Caki2 (cell line): ENCODE measurements at regions of chr11 and their contacts with region 1.

Region 1: GRCh38 chr11:1639102-1639620 is 9.6 kb downstream of the KRTAP5-5 start:
- DNase-seq: no peak

Region 2: DNA sequence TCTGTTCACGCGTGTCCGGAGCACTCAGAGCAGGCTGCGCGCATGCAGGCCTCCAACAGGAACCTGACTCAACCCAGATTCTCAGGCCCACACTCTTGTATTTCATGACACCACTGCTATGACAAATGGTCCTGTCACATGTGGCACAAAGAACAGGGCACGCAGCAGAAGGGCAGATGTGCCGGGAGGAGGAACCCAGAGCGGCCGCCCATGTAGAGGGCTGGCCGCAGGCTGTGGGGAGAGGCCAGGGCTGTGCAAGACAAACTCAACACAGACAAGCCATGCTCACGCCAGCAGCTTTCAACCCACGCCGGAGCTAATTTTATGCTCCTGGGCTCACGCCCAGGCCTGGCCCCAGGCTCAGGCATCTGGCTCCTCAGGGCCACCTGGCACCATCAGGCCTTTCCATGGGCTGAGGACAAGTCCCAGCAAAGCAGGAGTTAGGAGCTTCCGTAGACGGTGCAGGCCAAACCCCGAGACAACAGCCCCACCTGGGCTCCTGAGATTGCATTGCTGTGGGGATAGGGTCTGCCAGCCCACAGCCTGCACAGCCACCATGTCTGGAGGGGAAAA is 107.1 kb before region 1 on chr11:
- in situ Hi-C with region 1: loop called (anchors 10 kb)
- DNase-seq: no peak

Region 3: GRCh38 chr11:1694064-1694845 is 55.1 kb after region 1 on chr11:
- in situ Hi-C with region 1: no loop called
- DNase-seq: peak; percentile 61